PC-3 (cell line): ENCODE measurements at regions of chr18 and their contacts with region 1.

Region 1: DNA sequence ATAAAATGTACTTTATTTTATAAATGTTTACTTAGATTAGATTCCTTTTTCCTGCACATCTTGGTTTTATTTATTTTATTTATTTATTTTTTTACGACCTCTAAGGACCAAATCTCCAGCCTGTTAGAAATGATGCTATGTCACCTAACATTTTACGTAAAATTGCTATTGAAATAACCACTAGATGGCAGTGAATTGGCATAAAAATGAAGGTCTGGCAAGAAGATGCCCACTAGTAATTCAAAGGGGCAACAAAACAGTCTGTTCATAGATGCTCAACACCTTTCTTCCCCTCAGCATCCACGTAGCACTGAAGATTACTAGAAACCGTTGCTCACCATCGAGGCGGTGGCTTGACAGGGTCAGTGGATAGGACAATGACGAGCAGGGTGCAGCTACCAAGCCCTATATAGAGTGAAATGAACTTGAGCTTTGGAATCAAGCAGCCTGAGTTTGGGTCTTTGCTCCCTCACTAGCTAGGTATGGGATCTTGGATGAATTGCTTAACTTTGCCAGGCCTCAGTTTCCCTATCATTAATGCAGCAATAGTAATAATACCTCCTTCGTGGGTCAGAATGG is 128.7 kb upstream of the L3MBTL4 start:
- DNase-seq: peak; percentile 72
- ATAC-seq: peak; percentile 21; the same call in 1 of the 2 replicates
- H3K4me3 ChIP-seq: no peak overlapping the region
- H3K27ac ChIP-seq: no peak overlapping the region
- H3K4me1 ChIP-seq: peaks cover 17% of the 10 kb centered on the region; the same call in 1 of the 2 replicates
- H3K27me3 ChIP-seq: no peaks in the 10 kb centered on the region
- CTCF ChIP-seq: peak; percentile 77

Region 2: GRCh38 chr18:5779922-5780321 is 763.5 kb before region 1 on chr18:
- CTCF ChIA-PET with region 1: no interaction called
- POLR2A ChIA-PET with region 1: no interaction called
- intact Hi-C with region 1: no loop called
- DNase-seq: no peak
- ATAC-seq: no peak
- H3K4me3 ChIP-seq: no peak overlapping the region
- H3K27ac ChIP-seq: no peak overlapping the region
- H3K4me1 ChIP-seq: no peaks in the 10 kb centered on the region
- H3K27me3 ChIP-seq: 0 out of 2 replicates have a peak, but pooled peaks cover 6% of the 10 kb centered on the region
- CTCF ChIP-seq: no peak

Region 3: GRCh38 chr18:5868218-5869115 is 675.0 kb before region 1 on chr18:
- CTCF ChIA-PET with region 1: no interaction called
- POLR2A ChIA-PET with region 1: no interaction called
- intact Hi-C with region 1: loop called (anchors 5 kb)
- DNase-seq: peak; percentile 94
- ATAC-seq: peak; percentile 100
- H3K4me3 ChIP-seq: no peak overlapping the region
- H3K27ac ChIP-seq: no peak overlapping the region
- H3K4me1 ChIP-seq: no peaks in the 10 kb centered on the region
- H3K27me3 ChIP-seq: no peaks in the 10 kb centered on the region
- CTCF ChIP-seq: peak; percentile 94

Region 4: DNA sequence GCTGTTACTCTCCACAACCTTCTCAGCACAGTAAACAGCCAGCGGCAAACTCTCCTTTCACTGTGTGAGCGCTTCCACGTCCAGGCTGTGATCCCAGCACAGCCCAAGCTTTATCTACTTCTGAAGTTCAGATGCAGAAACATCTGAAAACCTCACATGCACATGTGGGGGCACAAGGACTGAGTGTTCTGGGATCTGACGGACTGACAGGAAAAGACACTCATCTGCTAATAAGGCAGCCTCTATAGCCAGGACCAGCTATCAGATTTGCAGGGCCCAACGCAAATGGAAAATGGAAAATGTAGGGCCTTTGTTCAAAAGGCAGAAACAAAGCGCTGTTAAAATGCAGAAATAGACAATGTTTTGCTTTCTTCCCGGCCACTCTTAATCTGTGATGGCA is 52.2 kb after region 1 on chr18:
- CTCF ChIA-PET with region 1: no interaction called
- POLR2A ChIA-PET with region 1: no interaction called
- intact Hi-C with region 1: no loop called
- DNase-seq: no peak
- ATAC-seq: no peak
- H3K4me3 ChIP-seq: no peak overlapping the region
- H3K27ac ChIP-seq: no peak overlapping the region
- H3K4me1 ChIP-seq: peaks cover 9% of the 10 kb centered on the region
- H3K27me3 ChIP-seq: no peaks in the 10 kb centered on the region
- CTCF ChIP-seq: no peak

Region 5: GRCh38 chr18:6683112-6683876 is 139.9 kb after region 1 on chr18:
- CTCF ChIA-PET with region 1: no interaction called
- POLR2A ChIA-PET with region 1: no interaction called
- intact Hi-C with region 1: no loop called
- DNase-seq: no peak
- ATAC-seq: no peak
- H3K4me3 ChIP-seq: no peak overlapping the region
- H3K27ac ChIP-seq: no peak overlapping the region
- H3K4me1 ChIP-seq: no peaks in the 10 kb centered on the region
- H3K27me3 ChIP-seq: no peaks in the 10 kb centered on the region
- CTCF ChIP-seq: no peak

Region 6: DNA sequence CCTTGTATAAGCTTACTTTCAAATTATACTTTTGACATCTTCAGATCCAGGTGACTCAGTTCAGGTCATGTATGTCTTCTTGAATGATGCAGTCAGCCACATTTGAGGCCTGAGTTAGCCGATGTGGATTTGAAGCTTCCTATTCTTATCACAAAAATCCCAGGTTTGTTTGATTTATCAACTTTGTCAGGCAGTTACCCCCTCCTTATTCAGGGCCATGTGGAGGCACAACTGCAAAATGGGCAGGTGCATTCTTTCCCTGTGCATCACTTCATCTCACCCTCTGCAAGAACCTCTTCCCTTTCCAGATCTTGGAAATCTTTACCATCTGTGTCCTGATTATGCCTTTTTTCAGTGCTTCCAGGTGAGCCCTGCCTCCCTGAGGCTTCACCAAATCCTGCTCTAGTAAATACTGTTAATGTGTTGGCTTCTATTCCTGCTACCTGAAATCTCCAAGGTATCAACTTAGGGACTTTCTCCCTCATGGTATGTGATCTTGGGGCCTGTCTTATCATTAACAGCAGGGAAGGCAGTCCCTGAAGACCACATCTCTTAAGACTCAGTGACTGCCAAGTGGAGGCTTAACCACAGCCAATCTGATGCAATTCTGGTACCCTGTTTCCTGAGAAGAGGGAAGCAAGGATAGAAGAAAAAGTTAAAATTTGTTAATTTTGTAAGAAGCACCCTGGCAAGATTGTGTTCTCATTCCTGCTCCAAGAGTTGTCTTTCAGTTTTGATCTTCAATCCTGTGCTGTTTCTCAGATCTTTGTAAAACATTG is 176.7 kb after region 1 on chr18:
- CTCF ChIA-PET with region 1: interaction called, 3 read pairs
- POLR2A ChIA-PET with region 1: no interaction called
- intact Hi-C with region 1: loop called (anchors 1 kb)
- DNase-seq: peak; percentile 74
- ATAC-seq: peak; percentile 27
- H3K4me3 ChIP-seq: peak overlapping the region; percentile 16; the same call in 1 of the 2 replicates
- H3K27ac ChIP-seq: peak overlapping the region; percentile 92
- H3K4me1 ChIP-seq: peaks cover 46% of the 10 kb centered on the region
- H3K27me3 ChIP-seq: no peaks in the 10 kb centered on the region
- CTCF ChIP-seq: no peak

Region 7: GRCh38 chr18:6874316-6874715 is 330.9 kb after region 1 on chr18:
- CTCF ChIA-PET with region 1: interaction called, 4 read pairs
- POLR2A ChIA-PET with region 1: no interaction called
- intact Hi-C with region 1: loop called (anchors 1 kb)
- DNase-seq: peak; percentile 44
- ATAC-seq: peak; percentile 46; the same call in 1 of the 2 replicates
- H3K4me3 ChIP-seq: no peak overlapping the region
- H3K27ac ChIP-seq: no peak overlapping the region
- H3K4me1 ChIP-seq: no peaks in the 10 kb centered on the region
- H3K27me3 ChIP-seq: no peaks in the 10 kb centered on the region
- CTCF ChIP-seq: peak; percentile 63

Region 8: DNA sequence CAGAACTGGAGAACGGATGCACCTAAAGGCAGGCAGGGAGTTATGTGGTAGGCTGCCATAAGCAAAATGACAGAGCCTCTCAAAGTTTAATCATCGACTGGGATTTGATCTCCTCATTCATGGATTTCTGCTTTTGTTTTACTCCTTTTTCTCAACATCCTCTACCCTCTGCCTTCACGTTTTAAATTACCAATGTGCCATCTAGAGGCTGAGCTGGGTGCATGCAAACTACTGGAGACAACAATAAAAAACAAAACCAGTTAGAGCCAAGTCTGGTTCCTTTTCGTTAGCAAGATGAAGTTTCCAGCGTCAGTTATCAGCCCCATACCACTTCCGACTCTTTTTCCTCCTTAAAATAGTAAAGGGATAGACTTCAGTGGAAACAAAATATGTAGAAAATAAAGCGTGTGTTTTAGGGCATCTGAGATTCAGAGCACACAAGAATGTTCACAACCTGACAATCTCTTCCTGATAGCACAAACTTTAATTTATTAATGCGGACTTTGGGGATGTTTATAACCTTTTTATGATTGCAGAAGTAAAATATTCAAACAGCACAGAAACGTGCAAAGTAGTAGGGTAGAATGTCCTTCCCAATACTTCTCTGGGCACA is 457.2 kb after region 1 on chr18:
- CTCF ChIA-PET with region 1: no interaction called
- POLR2A ChIA-PET with region 1: no interaction called
- intact Hi-C with region 1: loop called (anchors 5 kb)
- DNase-seq: peak; percentile 53
- ATAC-seq: peak; percentile 86
- H3K4me3 ChIP-seq: no peak overlapping the region
- H3K27ac ChIP-seq: no peak overlapping the region
- H3K4me1 ChIP-seq: no peaks in the 10 kb centered on the region
- H3K27me3 ChIP-seq: peaks cover 9% of the 10 kb centered on the region; the same call in 1 of the 2 replicates
- CTCF ChIP-seq: peak; percentile 81